ENCODE measurements at regions of chr1 and their contacts with region 1.

Region 1: GRCh38 chr1:209565759-209566678 is 17.5 kb upstream of the CAMK1G start:
- DNase-seq: peak; percentile 82
- H3K4me3 Mint-ChIP-seq: no peak overlapping the region
- H3K27ac Mint-ChIP-seq: no peak overlapping the region
- H3K4me1 Mint-ChIP-seq: peaks cover 28% of the 10 kb centered on the region
- H3K27me3 Mint-ChIP-seq: peaks cover 25% of the 10 kb centered on the region

Region 2: GRCh38 chr1:209207701-209208286 is 358.2 kb before region 1 on chr1:
- CTCF ChIA-PET with region 1: interaction called, 11 read pairs
- POLR2A ChIA-PET with region 1: no interaction called
- intact Hi-C with region 1: loop called (anchors 1 kb)
- DNase-seq: peak; percentile 39
- H3K4me3 Mint-ChIP-seq: no peak overlapping the region
- H3K27ac Mint-ChIP-seq: no peak overlapping the region
- H3K4me1 Mint-ChIP-seq: peaks cover 5% of the 10 kb centered on the region
- H3K27me3 Mint-ChIP-seq: peaks cover 28% of the 10 kb centered on the region

Region 3: DNA sequence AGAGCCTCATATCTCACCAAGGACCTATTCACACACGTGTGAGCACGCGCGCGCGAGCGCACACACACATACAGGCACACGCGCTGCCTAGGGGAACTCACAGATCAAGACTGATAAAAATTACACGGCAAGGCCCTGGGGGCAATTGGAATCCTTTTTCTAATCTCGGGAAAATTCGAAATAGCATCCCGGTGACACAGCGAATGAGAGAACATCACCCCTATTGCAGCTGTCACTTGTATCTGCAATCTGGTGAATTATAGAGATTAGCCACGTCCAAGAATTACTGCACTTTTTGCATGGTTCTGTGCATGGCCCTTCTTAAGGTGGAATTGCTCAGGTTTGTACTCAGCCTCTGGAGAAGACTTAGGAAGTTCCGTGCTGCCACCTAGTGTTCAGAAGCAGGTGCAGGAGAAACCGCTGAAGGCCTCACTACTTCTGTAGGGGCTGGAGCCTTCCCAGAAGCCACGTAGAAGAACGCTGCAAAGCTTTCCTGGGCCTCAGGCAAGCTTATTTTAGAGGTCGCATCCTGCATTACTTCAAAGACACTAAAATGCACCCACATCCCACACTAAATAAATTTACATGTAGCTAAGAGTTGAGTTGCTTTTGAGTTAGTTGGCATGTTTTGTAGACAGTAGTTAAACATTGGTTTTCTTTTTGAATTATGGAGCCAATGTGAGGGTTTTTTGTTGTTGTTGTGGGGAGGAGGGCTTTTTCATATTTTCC is 211.7 kb before region 1 on chr1:
- CTCF ChIA-PET with region 1: interaction called, 3 read pairs
- POLR2A ChIA-PET with region 1: no interaction called
- intact Hi-C with region 1: loop called (anchors 10 kb)
- DNase-seq: peak; percentile 60
- H3K4me3 Mint-ChIP-seq: no peak overlapping the region
- H3K27ac Mint-ChIP-seq: no peak overlapping the region
- H3K4me1 Mint-ChIP-seq: no peaks in the 10 kb centered on the region
- H3K27me3 Mint-ChIP-seq: no peaks in the 10 kb centered on the region

Region 4: DNA sequence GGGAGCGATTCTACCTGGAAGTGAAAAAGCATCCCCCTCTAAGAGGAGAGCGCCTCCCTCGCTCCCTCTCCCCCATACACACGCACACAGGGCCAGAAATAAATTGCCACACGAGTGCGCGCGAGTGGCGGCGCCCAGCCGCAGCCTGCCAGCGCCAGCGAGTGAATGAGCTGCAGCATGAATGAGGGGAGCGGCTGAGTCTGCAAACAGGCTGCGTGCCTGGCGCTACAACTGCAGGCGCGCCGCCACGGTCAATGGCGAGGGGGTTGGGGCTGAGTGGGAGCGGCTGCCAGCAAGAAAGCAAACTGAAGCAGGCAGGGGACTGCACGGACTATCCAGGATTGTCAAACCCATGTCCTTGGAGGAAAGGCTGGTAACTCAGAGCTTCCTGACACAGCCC is 19.7 kb after region 1 on chr1:
- CTCF ChIA-PET with region 1: interaction called, 70 read pairs
- POLR2A ChIA-PET with region 1: no interaction called
- intact Hi-C with region 1: no loop called
- DNase-seq: no peak
- H3K4me3 Mint-ChIP-seq: no peak overlapping the region
- H3K27ac Mint-ChIP-seq: no peak overlapping the region
- H3K4me1 Mint-ChIP-seq: peaks cover 3% of the 10 kb centered on the region
- H3K27me3 Mint-ChIP-seq: peaks cover 8% of the 10 kb centered on the region

Region 5: DNA sequence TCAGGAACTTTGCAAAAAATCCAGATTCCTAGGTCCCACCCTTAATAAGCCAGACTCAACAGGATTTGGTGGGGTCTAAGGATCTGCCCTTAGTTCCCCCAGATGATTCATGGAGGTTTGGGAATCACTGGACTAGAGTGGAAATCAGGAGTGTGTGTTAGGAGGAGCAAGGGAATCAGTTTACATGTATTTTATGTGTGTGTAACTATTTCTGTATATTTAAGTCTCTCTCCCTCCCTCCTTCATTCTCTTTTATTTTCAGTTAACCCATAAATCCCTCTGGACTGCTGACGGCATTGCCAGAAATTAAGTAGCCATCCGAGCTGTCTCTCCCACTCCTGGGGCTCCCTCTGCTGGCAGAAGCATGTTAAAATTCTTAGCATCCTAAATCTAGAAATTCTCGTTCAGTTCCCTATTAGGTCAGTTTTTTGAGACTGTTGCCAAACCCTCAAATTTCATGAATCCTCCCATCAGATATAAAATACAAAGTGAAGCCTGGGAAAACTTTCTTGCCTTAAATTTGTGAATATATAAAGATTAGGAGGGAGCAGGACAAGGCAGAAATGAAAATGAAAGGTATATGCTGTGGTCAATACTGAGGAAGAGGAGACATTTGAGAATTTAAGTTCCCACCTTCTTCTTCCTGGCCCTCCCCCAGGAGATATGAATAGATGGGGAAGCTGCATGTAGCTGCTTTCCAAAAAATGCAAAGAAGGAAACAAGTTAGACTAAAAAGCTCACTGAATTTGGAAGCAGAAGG is 126.9 kb after region 1 on chr1:
- CTCF ChIA-PET with region 1: interaction called, 15 read pairs
- POLR2A ChIA-PET with region 1: no interaction called
- intact Hi-C with region 1: loop called (anchors 2 kb)
- DNase-seq: peak; percentile 83
- H3K4me3 Mint-ChIP-seq: peak overlapping the region; percentile 22
- H3K27ac Mint-ChIP-seq: peak overlapping the region; percentile 7
- H3K4me1 Mint-ChIP-seq: peaks cover 61% of the 10 kb centered on the region
- H3K27me3 Mint-ChIP-seq: no peaks in the 10 kb centered on the region

Region 6: GRCh38 chr1:209827384-209828262 is 261.6 kb after region 1 on chr1 and contains the start of gene UTP25:
- CTCF ChIA-PET with region 1: interaction called, 10 read pairs
- POLR2A ChIA-PET with region 1: no interaction called
- intact Hi-C with region 1: loop called (anchors 5 kb)
- DNase-seq: peak; percentile 97
- H3K4me3 Mint-ChIP-seq: peak within 1 kb of the TSS; percentile 93
- H3K27ac Mint-ChIP-seq: peak within 1 kb of the TSS; percentile 88
- H3K4me1 Mint-ChIP-seq: peaks cover 42% of the 10 kb centered on the region
- H3K27me3 Mint-ChIP-seq: peaks cover 4% of the 10 kb centered on the region
- total RNA-seq, gene UTP25: 6.6 to 7.1 TPM